ENCODE measurements at regions of chr11 and their contacts with region 1.

Region 1: GRCh38 chr11:6251120-6251733 is 8.4 kb upstream of the CCKBR start:
- DNase-seq: peak; percentile 74
- H3K4me3 Mint-ChIP-seq: no peak overlapping the region
- H3K27ac Mint-ChIP-seq: no peak overlapping the region
- H3K4me1 Mint-ChIP-seq: peaks cover 16% of the 10 kb centered on the region
- H3K27me3 Mint-ChIP-seq: no peaks in the 10 kb centered on the region
- CTCF ChIP-seq: peak; percentile 87

Region 2: DNA sequence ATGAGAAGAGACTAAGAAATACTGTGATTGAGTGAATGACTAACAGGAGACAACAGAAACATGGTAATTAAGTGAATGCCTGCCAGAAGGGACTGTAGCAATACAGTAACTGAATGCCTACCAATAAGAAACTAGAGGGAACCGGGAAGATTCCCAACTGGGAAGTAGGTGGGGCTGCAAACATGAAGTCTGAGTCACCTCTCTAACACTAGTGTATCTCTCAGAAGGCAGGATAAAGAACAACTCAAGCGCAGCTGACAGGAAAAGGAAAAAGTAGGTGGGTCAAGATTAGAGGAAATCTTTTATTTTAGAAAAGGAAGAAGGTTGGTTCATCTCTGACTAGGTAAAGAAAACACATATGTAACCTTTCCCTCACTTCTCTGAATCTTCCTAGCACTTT is 31.9 kb before region 1 on chr11:
- CTCF ChIA-PET with region 1: interaction called, 10 read pairs
- POLR2A ChIA-PET with region 1: interaction called, 4 read pairs
- intact Hi-C with region 1: no loop called
- DNase-seq: peak; percentile 95
- H3K4me3 Mint-ChIP-seq: no peak overlapping the region
- H3K27ac Mint-ChIP-seq: peak overlapping the region; percentile 57
- H3K4me1 Mint-ChIP-seq: peaks cover 13% of the 10 kb centered on the region
- H3K27me3 Mint-ChIP-seq: no peaks in the 10 kb centered on the region
- CTCF ChIP-seq: no peak

Region 3: DNA sequence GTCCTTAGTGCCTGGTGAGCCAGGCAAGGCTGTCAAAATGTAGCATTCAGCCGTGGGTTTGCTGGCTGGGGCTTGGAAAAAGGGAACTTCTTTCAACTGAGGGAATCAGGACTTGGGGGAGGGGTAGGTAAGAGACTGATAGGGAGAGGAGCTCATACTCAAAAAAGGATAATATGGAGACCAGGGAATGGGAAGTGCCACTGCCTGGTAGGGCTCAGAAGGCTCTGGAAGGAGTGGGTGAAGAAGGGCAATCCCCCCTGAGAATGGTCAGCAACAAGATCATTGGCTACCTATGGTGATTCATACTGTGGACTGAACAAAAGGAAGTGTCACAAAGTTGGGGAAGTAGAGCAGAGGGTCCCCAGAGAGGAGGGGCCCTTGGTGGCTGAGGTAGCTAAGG is 10.4 kb before region 1 on chr11:
- CTCF ChIA-PET with region 1: interaction called, 50 read pairs
- POLR2A ChIA-PET with region 1: interaction called, 31 read pairs
- intact Hi-C with region 1: loop called (anchors 2 kb)
- DNase-seq: no peak
- H3K4me3 Mint-ChIP-seq: no peak overlapping the region
- H3K27ac Mint-ChIP-seq: no peak overlapping the region
- H3K4me1 Mint-ChIP-seq: peaks cover 7% of the 10 kb centered on the region
- H3K27me3 Mint-ChIP-seq: no peaks in the 10 kb centered on the region
- CTCF ChIP-seq: no peak

Region 4: GRCh38 chr11:6285019-6285418 is 33.8 kb after region 1 on chr11:
- CTCF ChIA-PET with region 1: interaction called, 16 read pairs
- POLR2A ChIA-PET with region 1: no interaction called
- intact Hi-C with region 1: no loop called
- DNase-seq: no peak
- H3K4me3 Mint-ChIP-seq: no peak overlapping the region
- H3K27ac Mint-ChIP-seq: no peak overlapping the region
- H3K4me1 Mint-ChIP-seq: peaks cover 10% of the 10 kb centered on the region
- H3K27me3 Mint-ChIP-seq: peaks cover 11% of the 10 kb centered on the region
- CTCF ChIP-seq: no peak

Region 5: DNA sequence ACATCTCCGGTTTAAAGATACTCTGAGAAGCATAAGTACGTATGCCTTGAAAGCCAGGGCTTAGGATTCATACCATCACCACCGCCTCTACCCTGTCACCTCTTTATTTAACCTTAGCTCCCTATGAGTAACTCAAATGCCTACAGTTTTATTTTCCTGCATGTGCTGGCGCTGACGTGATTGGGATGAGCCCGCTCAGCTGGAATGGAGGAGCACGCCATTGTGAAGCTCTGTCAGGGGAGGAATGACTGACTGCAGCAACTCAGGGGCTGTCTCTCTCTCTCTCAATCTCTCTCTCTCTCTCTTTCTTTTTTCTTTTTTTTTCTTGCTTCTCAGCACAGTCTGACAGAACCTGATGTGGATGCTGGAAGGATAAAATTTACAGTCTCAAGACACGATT is 56.6 kb after region 1 on chr11:
- CTCF ChIA-PET with region 1: interaction called, 185 read pairs
- POLR2A ChIA-PET with region 1: no interaction called
- intact Hi-C with region 1: no loop called
- DNase-seq: no peak
- H3K4me3 Mint-ChIP-seq: no peak overlapping the region
- H3K27ac Mint-ChIP-seq: no peak overlapping the region
- H3K4me1 Mint-ChIP-seq: no peaks in the 10 kb centered on the region
- H3K27me3 Mint-ChIP-seq: peaks cover 23% of the 10 kb centered on the region
- CTCF ChIP-seq: no peak

Measured in MCF 10A (cell line).